ENCODE measurements at regions of chr1 and their contacts with region 1.

Region 1: GRCh38 chr1:203625628-203626019 is 1.0 kb upstream of the ATP2B4 start:
- DNase-seq: peak; percentile 78
- H3K4me3 Mint-ChIP-seq: peak overlapping the region; percentile 90
- H3K27ac Mint-ChIP-seq: peak overlapping the region; percentile 97
- H3K4me1 Mint-ChIP-seq: peaks cover 52% of the 10 kb centered on the region
- H3K27me3 Mint-ChIP-seq: no peaks in the 10 kb centered on the region

Region 2: DNA sequence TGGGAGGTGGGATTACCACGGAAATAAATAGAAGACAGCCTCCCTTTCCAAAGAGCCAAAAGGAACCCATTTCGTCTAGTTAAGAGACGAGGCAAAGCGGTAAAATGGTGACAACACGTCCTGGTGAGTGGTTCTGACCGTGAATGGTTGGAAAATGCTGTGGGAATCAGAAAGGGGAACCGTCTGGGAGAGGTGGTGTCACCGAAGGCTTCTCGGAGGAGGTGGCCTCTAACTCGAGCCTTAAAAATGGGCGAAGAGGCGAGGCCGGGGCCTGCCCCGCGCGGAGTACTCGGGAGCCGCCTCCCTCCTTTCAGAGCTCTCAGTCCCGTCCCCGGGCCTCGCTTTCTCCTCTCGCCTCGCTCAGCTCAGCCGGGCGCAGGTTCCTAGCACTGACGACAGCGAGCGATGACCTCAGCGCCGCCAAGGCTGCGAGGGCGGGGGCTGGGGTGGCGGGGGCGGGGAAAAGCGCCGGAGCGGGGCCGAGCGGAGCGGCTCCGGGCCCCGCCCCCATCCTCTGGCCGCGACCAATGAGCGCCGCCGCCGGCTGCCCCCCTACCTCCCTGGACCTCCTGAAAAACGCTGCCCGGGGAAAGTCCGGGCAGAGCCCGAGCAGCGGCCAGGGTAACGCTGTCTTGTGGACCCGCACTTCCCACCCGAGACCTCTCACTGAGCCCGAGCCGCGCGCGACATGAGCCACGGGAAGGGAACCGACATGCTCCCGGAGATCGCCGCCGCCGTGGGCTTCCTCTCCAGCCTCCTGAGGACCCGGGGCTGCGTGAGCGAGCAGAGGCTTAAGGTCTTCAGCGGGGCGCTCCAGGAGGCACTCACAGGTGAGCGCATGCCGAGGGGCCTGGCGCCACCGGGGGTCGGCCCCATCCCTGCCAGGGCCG is 320.5 kb before region 1 on chr1 and contains the start of gene BTG2:
- CTCF ChIA-PET with region 1: no interaction called
- POLR2A ChIA-PET with region 1: no interaction called
- intact Hi-C with region 1: loop called (anchors 5 kb)
- DNase-seq: peak; percentile 95
- H3K4me3 Mint-ChIP-seq: peak within 1 kb of the TSS; percentile 92
- H3K27ac Mint-ChIP-seq: peak within 1 kb of the TSS; percentile 98
- H3K4me1 Mint-ChIP-seq: peaks cover 51% of the 10 kb centered on the region
- H3K27me3 Mint-ChIP-seq: no peaks in the 10 kb centered on the region
- total RNA-seq, gene BTG2: 150 TPM

Region 3: GRCh38 chr1:203593723-203594122 is 31.9 kb before region 1 on chr1:
- CTCF ChIA-PET with region 1: interaction called, 10 read pairs
- POLR2A ChIA-PET with region 1: interaction called, 5 read pairs
- intact Hi-C with region 1: loop called (anchors 1 kb)
- DNase-seq: peak; percentile 76
- H3K4me3 Mint-ChIP-seq: no peak overlapping the region
- H3K27ac Mint-ChIP-seq: peak overlapping the region; percentile 4
- H3K4me1 Mint-ChIP-seq: peaks cover 15% of the 10 kb centered on the region
- H3K27me3 Mint-ChIP-seq: no peaks in the 10 kb centered on the region

Region 4: GRCh38 chr1:203673550-203674427 is 48.2 kb after region 1 on chr1:
- CTCF ChIA-PET with region 1: interaction called, 24 read pairs
- POLR2A ChIA-PET with region 1: interaction called, 13 read pairs
- intact Hi-C with region 1: loop called (anchors 1 kb)
- DNase-seq: peak; percentile 84
- H3K4me3 Mint-ChIP-seq: peak overlapping the region; percentile 46
- H3K27ac Mint-ChIP-seq: peak overlapping the region; percentile 90
- H3K4me1 Mint-ChIP-seq: peaks cover 62% of the 10 kb centered on the region
- H3K27me3 Mint-ChIP-seq: no peaks in the 10 kb centered on the region

Region 5: GRCh38 chr1:203702130-203702577 is 76.5 kb after region 1 on chr1:
- CTCF ChIA-PET with region 1: interaction called, 69 read pairs
- POLR2A ChIA-PET with region 1: interaction called, 8 read pairs
- intact Hi-C with region 1: loop called (anchors 1 kb)
- DNase-seq: peak; percentile 69
- H3K4me3 Mint-ChIP-seq: no peak overlapping the region
- H3K27ac Mint-ChIP-seq: peak overlapping the region; percentile 75
- H3K4me1 Mint-ChIP-seq: peaks cover 2% of the 10 kb centered on the region
- H3K27me3 Mint-ChIP-seq: no peaks in the 10 kb centered on the region

Region 6: GRCh38 chr1:203823306-203823705 is 197.7 kb after region 1 on chr1:
- CTCF ChIA-PET with region 1: no interaction called
- POLR2A ChIA-PET with region 1: no interaction called
- intact Hi-C with region 1: loop called (anchors 10 kb)
- DNase-seq: no peak
- H3K4me3 Mint-ChIP-seq: no peak overlapping the region
- H3K27ac Mint-ChIP-seq: no peak overlapping the region
- H3K4me1 Mint-ChIP-seq: peaks cover 25% of the 10 kb centered on the region
- H3K27me3 Mint-ChIP-seq: no peaks in the 10 kb centered on the region